AG04450 (cell line): ENCODE measurements at regions of chr11 and their contacts with region 1.

Region 1: GRCh38 chr11:73779084-73779902 is 8.4 kb upstream of the MRPL48 start:
- DNase-seq: peak; percentile 94
- H3K4me3 ChIP-seq: peak overlapping the region; percentile 69
- H3K27ac ChIP-seq: peak overlapping the region; percentile 98
- H3K27me3 ChIP-seq: no peaks in the 10 kb centered on the region
- CTCF ChIP-seq: no peak

Region 2: GRCh38 chr11:73760679-73761402 is 18.5 kb before region 1 on chr11 and contains the start of gene RAB6A:
- CTCF ChIA-PET with region 1: interaction called, 3 read pairs
- POLR2A ChIA-PET with region 1: interaction called, 55 read pairs
- DNase-seq: peak; percentile 99
- H3K4me3 ChIP-seq: peak within 1 kb of the TSS; percentile 91
- H3K27ac ChIP-seq: peak within 1 kb of the TSS; percentile 91
- H3K27me3 ChIP-seq: peaks cover 2% of the 10 kb centered on the region
- CTCF ChIP-seq: peak; percentile 35; the same call in 1 of the 2 replicates
- polyA plus RNA-seq, gene RAB6A: 97.0 and 153 TPM in 2 replicates